Activated B cell treated with CpG ODN at 0.5 μM for 24 hours (primary cell): ENCODE measurements at regions of chr3 and their contacts with region 1.

Region 1: GRCh38 chr3:171187706-171188290 is 161.3 kb upstream of the SLC2A2 start:
- DNase-seq: no peak
- ATAC-seq: no peak
- H3K4me3 Mint-ChIP-seq: no peak overlapping the region
- H3K27ac Mint-ChIP-seq: no peak overlapping the region
- H3K4me1 Mint-ChIP-seq: no peaks in the 10 kb centered on the region
- H3K27me3 Mint-ChIP-seq: no peaks in the 10 kb centered on the region
- CTCF ChIP-seq: no peak

Region 2: GRCh38 chr3:171198781-171199472 is 11.1 kb after region 1 on chr3:
- CTCF ChIA-PET with region 1: no interaction called
- POLR2A ChIA-PET with region 1: no interaction called
- intact Hi-C with region 1: no loop called
- DNase-seq: no peak
- ATAC-seq: no peak
- H3K4me3 Mint-ChIP-seq: no peak overlapping the region
- H3K27ac Mint-ChIP-seq: no peak overlapping the region
- H3K4me1 Mint-ChIP-seq: no peaks in the 10 kb centered on the region
- H3K27me3 Mint-ChIP-seq: no peaks in the 10 kb centered on the region
- CTCF ChIP-seq: no peak

Region 3: GRCh38 chr3:171772427-171773056 is 584.7 kb after region 1 on chr3:
- CTCF ChIA-PET with region 1: no interaction called
- POLR2A ChIA-PET with region 1: no interaction called
- intact Hi-C with region 1: loop called (anchors 10 kb)
- DNase-seq: no peak
- ATAC-seq: no peak
- H3K4me3 Mint-ChIP-seq: no peak overlapping the region
- H3K27ac Mint-ChIP-seq: no peak overlapping the region
- H3K4me1 Mint-ChIP-seq: peaks cover 3% of the 10 kb centered on the region
- H3K27me3 Mint-ChIP-seq: peaks cover 3% of the 10 kb centered on the region
- CTCF ChIP-seq: no peak

Region 4: DNA sequence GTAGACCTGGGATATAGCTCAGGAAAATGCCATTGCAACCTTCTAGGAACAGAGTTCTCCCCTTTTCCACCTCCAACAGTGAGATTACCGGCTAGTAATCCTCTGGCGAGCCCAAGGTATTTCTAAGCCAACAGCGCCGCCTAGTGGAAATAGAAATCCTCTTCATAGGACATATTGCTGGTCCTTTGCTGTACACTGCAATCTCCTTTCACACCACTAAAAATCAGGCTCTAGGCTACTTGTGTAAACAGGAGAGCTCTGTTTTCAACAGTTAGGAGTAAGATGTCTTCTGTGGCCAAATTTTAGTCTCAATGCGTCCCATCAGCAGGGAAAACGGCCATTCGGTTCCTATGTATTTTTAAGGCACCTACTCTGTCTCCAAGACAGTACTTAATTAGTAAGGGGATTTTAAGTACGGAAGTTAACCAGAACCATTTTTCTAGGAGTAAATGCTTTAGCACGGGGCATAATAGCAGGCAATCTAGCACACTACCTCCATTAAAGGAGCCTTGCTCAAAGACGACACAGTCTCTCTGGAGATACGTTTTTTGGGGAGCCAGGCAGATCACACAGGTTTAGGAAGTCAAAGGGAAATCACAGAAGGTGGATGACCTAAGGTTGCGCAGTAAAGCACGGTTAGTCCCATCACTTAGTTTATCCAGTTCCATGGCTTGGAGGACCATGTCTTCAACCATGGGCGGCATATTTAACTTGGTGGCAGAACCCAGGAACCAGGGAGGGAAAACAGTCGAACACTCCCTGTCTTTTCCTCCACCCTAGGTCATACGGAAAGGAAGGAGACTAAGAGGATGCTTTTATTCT is 1479.3 kb after region 1 on chr3:
- CTCF ChIA-PET with region 1: no interaction called
- POLR2A ChIA-PET with region 1: no interaction called
- intact Hi-C with region 1: loop called (anchors 5 kb)
- DNase-seq: no peak
- ATAC-seq: peak; percentile 69
- H3K4me3 Mint-ChIP-seq: no peak overlapping the region
- H3K27ac Mint-ChIP-seq: no peak overlapping the region
- H3K4me1 Mint-ChIP-seq: peaks cover 14% of the 10 kb centered on the region
- H3K27me3 Mint-ChIP-seq: no peaks in the 10 kb centered on the region
- CTCF ChIP-seq: no peak